Mammary epithelial cell (primary cell): ENCODE measurements at regions of chr7 and their contacts with region 1.

Region 1: GRCh38 chr7:35037526-35038339 is 448 bp upstream of the DPY19L1 start:
- DNase-seq: peak; percentile 88
- H3K4me3 ChIP-seq: peak overlapping the region; percentile 43 to 82 (median 78)
- H3K27ac ChIP-seq: peak overlapping the region; percentile 41
- H3K4me1 ChIP-seq: peaks cover 22% of the 10 kb centered on the region
- H3K27me3 ChIP-seq: no peaks in the 10 kb centered on the region
- CTCF ChIP-seq: peak; percentile 57 to 83

Region 2: DNA sequence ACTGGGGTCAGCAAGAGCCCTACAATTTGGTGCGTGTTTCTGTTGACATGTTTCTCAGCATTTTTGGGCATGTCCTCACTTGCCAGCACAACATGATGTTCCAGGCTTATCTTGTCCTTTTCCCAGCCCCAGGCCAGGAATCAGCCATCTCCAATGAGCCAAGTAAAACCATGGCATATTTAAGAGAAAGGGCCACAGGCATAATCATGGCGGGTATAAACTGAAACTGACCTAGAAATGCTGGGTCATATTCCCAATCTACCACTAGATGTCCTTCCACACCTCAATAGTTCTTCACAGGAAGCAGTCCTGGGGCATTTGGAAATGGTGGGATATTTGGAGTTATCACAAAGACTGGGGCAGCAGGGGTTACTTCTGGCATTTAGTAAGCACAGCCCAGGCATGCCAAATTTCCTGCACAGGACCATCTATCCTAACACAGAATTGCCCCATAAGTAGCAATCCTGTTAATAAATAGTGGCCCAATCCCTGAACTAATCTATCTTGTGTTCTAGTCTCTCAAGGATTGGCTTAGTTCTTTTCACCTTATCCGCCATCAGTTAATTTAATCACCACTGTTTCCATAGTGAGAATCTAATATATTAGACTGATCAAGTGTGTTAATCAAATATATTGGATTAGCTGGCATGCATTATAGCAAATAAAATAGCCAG is 278.1 kb before region 1 on chr7:
- CTCF ChIA-PET with region 1: no interaction called
- dilution Hi-C with region 1: no loop called
- in situ Hi-C with region 1: no loop called
- intact Hi-C with region 1: loop called (anchors 5 kb)
- DNase-seq: peak; percentile 5
- H3K4me3 ChIP-seq: no peak overlapping the region
- H3K27ac ChIP-seq: no peak overlapping the region
- H3K4me1 ChIP-seq: no peaks in the 10 kb centered on the region
- H3K27me3 ChIP-seq: no peaks in the 10 kb centered on the region
- CTCF ChIP-seq: peak; percentile 63 to 64

Region 3: DNA sequence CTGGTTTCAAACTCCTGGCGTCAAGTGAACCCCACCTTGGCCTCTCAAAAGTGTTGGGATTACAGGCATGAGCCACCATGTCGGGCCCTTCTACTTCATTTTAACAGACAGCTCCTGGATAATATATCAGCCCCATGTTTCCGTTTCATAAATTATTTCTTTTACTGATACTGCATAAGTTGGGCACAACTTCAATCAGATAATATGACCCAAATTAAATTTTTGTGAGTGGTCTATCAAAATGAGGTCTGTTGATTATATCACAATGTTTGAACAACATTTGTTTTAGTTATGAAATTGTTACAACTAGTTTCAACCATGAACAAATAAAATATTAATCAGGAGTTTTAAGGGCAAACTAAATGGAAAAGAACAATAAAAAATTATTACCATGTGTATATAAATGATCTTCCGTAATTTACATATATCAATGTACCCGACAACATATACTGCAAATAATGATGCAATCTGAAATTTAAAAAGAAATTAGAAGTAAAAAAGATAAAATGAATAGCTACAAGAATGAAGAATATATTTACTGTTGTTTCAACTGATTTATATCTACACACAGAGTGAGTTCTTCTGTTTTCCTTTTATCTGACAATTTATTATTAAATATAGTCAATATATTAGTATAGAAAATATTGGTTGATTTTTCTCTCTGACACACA is 71.1 kb before region 1 on chr7:
- CTCF ChIA-PET with region 1: no interaction called
- dilution Hi-C with region 1: no loop called
- in situ Hi-C with region 1: no loop called
- intact Hi-C with region 1: no loop called
- DNase-seq: no peak
- H3K4me3 ChIP-seq: no peak overlapping the region
- H3K27ac ChIP-seq: no peak overlapping the region
- H3K4me1 ChIP-seq: no peaks in the 10 kb centered on the region
- H3K27me3 ChIP-seq: no peaks in the 10 kb centered on the region
- CTCF ChIP-seq: no peak

Region 4: DNA sequence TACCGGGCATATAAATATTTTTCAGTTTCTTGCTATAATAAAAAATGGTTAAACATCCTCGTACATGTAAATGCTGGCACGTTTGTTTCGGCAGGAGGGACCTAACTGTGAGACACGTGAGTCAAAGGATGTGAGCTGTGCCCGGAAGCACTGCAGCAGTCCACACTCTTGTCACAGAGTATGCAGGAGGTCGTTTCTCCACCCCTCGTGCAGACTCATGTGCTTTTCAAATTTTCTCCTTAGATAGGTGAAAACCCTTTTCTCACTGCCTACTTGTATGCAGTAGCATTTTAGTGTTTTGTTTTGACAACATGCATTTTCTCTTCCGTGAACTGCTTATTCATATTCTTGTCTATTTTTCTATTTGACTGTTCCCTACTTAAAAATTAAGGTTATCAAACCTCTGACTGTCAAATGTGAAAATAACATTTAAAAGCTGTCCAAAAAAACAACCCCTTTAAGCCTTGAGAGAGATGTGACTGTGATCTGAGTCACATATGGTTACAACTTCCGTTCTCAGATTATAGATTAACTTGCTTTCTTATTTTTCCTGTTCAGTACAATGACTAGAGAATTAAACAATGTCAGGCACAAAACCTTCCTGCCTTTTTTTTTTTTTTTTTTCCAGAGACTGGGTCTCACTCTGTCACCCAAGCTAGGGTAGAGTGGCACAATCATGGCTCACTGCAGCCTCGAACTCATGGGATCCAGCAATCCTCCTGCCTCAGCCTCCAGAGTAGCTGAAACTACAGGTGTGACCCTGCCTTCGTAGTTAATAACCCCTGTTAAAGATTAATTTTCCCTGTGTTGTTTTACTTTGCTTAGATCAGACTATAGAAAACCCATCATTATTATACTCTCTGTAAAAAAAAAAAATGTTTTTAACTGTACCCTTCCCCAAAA is 45.5 kb before region 1 on chr7:
- CTCF ChIA-PET with region 1: no interaction called
- dilution Hi-C with region 1: no loop called
- in situ Hi-C with region 1: no loop called
- intact Hi-C with region 1: loop called (anchors 5 kb)
- DNase-seq: peak; percentile 35
- H3K4me3 ChIP-seq: no peak overlapping the region
- H3K27ac ChIP-seq: no peak overlapping the region
- H3K4me1 ChIP-seq: peaks cover 4% of the 10 kb centered on the region
- H3K27me3 ChIP-seq: no peaks in the 10 kb centered on the region
- CTCF ChIP-seq: no peak

Region 5: GRCh38 chr7:35513828-35514227 is 476.1 kb after region 1 on chr7:
- CTCF ChIA-PET with region 1: interaction called, 10 read pairs
- dilution Hi-C with region 1: no loop called
- in situ Hi-C with region 1: no loop called
- intact Hi-C with region 1: no loop called
- DNase-seq: no peak
- H3K4me3 ChIP-seq: no peak overlapping the region
- H3K27ac ChIP-seq: no peak overlapping the region
- H3K4me1 ChIP-seq: no peaks in the 10 kb centered on the region
- H3K27me3 ChIP-seq: no peaks in the 10 kb centered on the region
- CTCF ChIP-seq: no peak

Region 6: DNA sequence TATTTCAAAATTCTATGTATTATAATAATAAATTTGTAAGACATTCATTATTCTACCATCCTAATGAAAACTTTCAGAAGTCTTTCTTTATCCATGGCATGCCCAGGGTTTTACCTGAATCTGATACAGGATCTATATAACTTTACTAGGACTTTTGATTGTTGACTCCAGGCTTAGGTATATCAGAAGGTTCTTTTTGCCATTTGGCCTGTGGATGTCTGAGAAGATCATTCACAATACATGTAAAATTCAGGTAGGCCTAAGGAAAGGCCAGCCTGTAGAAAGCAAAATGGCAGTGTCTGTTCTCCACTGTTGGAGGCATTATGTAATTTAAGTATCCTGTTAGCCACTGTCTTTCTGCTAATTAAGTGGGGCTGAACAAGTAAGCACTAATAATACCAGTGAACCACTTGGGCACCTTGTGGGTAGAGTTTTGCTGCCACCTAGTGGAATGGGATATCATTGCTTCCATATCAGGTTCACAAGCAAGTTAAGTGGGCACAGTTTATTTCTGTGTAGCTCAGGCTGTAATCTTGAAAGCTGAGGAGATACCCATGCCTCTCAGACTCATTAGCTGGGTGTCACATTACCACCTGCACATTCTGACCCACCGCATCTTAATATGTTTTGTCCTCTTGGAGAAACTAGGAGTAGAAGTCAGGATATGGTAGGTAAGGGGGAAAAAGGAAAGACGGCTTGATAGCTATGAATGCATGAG is 868.6 kb after region 1 on chr7:
- CTCF ChIA-PET with region 1: no interaction called
- dilution Hi-C with region 1: no loop called
- in situ Hi-C with region 1: no loop called
- intact Hi-C with region 1: no loop called
- DNase-seq: peak; percentile 54
- H3K4me3 ChIP-seq: no peak overlapping the region
- H3K27ac ChIP-seq: no peak overlapping the region
- H3K4me1 ChIP-seq: peaks cover 10% of the 10 kb centered on the region
- H3K27me3 ChIP-seq: no peaks in the 10 kb centered on the region
- CTCF ChIP-seq: peak; percentile 88 to 90